Aorta (tissue), 5 donors: ENCODE measurements at regions of chr13 and their contacts with region 1.

Region 1: GRCh38 chr13:47598340-47598911 is 402.6 kb downstream of the SUCLA2 start:
- DNase-seq: no peak
- ATAC-seq: no peak
- H3K4me3 ChIP-seq: no peak overlapping the region
- H3K27ac ChIP-seq: no peak overlapping the region
- H3K4me1 ChIP-seq: peaks cover 0 to 3% of the 10 kb centered on the region in 2 donors
- H3K27me3 ChIP-seq: no peaks in the 10 kb centered on the region

Region 2: DNA sequence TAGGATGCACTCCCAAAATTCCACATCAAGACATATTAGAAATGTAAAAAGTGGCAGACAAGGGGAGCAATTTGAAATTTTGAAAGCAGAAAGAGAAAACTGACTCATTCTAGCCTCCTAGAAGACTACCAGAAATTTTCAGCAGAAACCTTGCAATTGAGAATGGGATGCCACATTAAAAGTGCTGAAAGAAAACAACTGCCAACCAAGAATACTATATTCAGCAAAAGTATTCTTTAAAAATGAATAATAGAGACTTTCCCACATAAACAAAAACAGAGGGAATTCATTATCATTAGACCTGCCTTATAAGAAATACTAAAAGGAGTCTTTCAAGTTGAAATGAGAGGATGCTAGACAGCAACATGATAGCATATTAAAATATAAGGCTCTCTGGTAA is 623.3 kb before region 1 on chr13:
- intact Hi-C with region 1: loop called (anchors 5 to 10 kb)
- DNase-seq: no peak
- ATAC-seq: no peak
- H3K4me3 ChIP-seq: no peak overlapping the region
- H3K27ac ChIP-seq: no peak overlapping the region
- H3K4me1 ChIP-seq: no peaks in the 10 kb centered on the region
- H3K27me3 ChIP-seq: no peaks in the 10 kb centered on the region

Region 3: GRCh38 chr13:46983881-46984280 is 614.5 kb before region 1 on chr13:
- intact Hi-C with region 1: loop called (anchors 5 to 10 kb)
- DNase-seq: no peak
- ATAC-seq: no peak
- H3K4me3 ChIP-seq: no peak overlapping the region
- H3K27ac ChIP-seq: no peak overlapping the region
- H3K4me1 ChIP-seq: peaks cover 0 to 4% of the 10 kb centered on the region in 2 donors
- H3K27me3 ChIP-seq: no peaks in the 10 kb centered on the region